AG04449 (cell line): ENCODE measurements at regions of chr4 and their contacts with region 1.

Region 1: DNA sequence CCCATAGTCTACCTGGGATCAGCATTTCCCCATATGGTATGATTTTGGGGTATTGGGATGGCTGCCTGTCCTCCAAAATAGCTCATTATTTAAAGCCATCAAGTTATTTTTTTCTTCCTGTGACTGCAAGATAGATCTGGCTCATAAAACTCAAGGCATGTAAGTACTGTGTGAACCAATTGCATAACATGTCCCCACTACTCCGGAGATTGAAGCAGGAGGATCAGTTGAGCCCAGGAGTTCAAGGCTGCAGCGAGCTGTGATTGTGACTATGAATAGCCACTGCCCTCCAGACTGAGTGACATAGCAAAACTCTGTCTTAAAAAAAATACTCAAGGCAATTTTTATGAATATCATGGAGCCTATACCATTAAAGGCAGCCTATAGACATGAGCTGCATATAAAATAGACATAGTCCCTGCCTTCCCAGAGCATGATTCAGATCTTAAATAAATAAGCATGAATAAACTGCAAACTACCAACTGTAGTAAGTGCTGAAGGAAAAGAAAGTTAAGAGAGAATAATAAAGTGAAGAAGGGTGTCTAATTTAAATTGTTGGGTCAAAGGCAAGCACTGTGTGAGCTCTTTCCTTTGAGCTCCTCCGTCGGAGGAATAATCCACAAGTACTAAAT is 16.9 kb upstream of the MMAA start:
- DNase-seq: no peak
- H3K4me3 ChIP-seq: no peak overlapping the region
- CTCF ChIP-seq: no peak

Region 2: GRCh38 chr4:145216535-145216934 is 385.7 kb before region 1 on chr4:
- CTCF ChIA-PET with region 1: interaction called, 18 read pairs
- POLR2A ChIA-PET with region 1: no interaction called
- DNase-seq: no peak
- H3K4me3 ChIP-seq: no peak overlapping the region
- CTCF ChIP-seq: peak; percentile 33

Region 3: GRCh38 chr4:145580906-145581305 is 21.3 kb before region 1 on chr4:
- CTCF ChIA-PET with region 1: no interaction called
- POLR2A ChIA-PET with region 1: no interaction called
- DNase-seq: no peak
- H3K4me3 ChIP-seq: no peak overlapping the region
- CTCF ChIP-seq: no peak